Transverse colon (tissue), 4 donors: ENCODE measurements at regions of chr16 and their contacts with region 1.

Region 1: GRCh38 chr16:35252356-35252941 is 1793.0 kb downstream of the TP53TG3F start:
- DNase-seq: no peak
- H3K4me3 ChIP-seq: no peak overlapping the region
- H3K27ac ChIP-seq: no peak overlapping the region
- H3K4me1 ChIP-seq: no peaks in the 10 kb centered on the region
- H3K27me3 ChIP-seq: no peaks in the 10 kb centered on the region
- CTCF ChIP-seq: no peak
- EP300 ChIP-seq: no peak
- POLR2A ChIP-seq: no peak

Region 2: DNA sequence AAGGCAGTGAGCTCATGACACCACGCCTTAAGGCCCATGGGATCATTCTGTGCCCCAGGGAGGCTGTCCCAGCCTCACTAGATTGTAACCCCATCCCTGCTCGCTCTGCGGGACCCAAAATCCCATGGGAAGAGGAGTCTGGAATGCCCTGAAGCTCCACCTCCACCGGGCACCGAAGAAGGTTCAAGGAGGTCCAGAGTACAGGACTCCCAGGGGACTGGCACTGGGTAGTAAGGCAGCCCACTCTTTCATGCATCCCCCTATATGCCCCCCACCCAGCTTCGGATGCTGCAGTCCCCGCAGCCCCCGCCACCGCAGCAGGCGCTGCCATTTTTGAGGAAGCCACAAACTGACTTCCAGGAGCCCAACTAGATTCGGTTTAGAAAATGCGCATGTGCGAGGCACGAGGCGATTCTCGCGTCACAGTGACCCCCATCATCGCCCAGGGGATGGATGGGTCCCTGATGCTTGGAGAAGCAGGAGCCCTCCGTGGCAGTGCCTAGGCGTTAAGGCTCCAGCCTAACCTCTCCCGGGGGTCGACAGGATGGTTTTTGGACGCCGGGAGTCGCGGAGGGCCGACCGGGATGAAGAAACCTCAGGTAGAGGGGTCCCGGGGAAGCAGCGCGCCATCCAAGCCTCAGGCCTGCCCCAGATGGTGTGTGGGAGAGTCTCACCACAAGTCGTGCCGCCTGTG is 112.0 kb before region 1 on chr16:
- in situ Hi-C with region 1: no loop called
- intact Hi-C with region 1: no loop called
- DNase-seq: no peak
- H3K4me3 ChIP-seq: no peak overlapping the region
- H3K27ac ChIP-seq: no peak overlapping the region
- H3K4me1 ChIP-seq: no peaks in the 10 kb centered on the region
- H3K27me3 ChIP-seq: no peaks in the 10 kb centered on the region
- CTCF ChIP-seq: no peak
- EP300 ChIP-seq: no peak
- POLR2A ChIP-seq: no peak

Region 3: DNA sequence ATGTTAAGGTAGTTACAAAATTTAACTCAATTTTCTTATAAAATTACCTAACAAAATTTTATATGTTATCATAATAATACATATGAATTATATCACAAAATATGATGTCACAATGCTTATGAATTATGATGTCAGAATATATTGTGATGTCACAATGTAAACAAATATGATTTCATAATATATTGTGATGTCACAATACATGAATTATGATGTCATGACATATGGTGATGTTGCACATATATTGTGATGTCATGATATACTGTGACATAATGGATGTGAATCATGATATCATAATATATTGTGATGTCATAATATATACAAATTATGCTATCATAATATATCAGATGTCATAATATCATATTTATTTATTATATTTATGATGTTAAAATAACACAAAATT is 86.9 kb after region 1 on chr16:
- in situ Hi-C with region 1: no loop called
- intact Hi-C with region 1: no loop called
- DNase-seq: no peak
- H3K4me3 ChIP-seq: no peak overlapping the region
- H3K27ac ChIP-seq: no peak overlapping the region
- H3K4me1 ChIP-seq: no peaks in the 10 kb centered on the region
- H3K27me3 ChIP-seq: no peaks in the 10 kb centered on the region
- CTCF ChIP-seq: no peak
- EP300 ChIP-seq: no peak
- POLR2A ChIP-seq: no peak

Region 4: GRCh38 chr16:35365675-35366074 is 113.2 kb after region 1 on chr16:
- in situ Hi-C with region 1: loop called in 1 of 4 experiments (anchors 25 kb)
- intact Hi-C with region 1: no loop called
- DNase-seq: no peak
- H3K4me3 ChIP-seq: no peak overlapping the region
- H3K27ac ChIP-seq: no peak overlapping the region
- H3K4me1 ChIP-seq: no peaks in the 10 kb centered on the region
- H3K27me3 ChIP-seq: no peaks in the 10 kb centered on the region
- CTCF ChIP-seq: no peak
- EP300 ChIP-seq: no peak
- POLR2A ChIP-seq: no peak